Left cardiac atrium (tissue), 4 donors: ENCODE measurements at regions of chrX and their contacts with region 1.

Region 1: GRCh38 chrX:150772150-150772970 is 79.2 kb downstream of the MTMR1 start:
- DNase-seq: peak; percentile 76
- ATAC-seq: peak; percentile 86

Region 2: DNA sequence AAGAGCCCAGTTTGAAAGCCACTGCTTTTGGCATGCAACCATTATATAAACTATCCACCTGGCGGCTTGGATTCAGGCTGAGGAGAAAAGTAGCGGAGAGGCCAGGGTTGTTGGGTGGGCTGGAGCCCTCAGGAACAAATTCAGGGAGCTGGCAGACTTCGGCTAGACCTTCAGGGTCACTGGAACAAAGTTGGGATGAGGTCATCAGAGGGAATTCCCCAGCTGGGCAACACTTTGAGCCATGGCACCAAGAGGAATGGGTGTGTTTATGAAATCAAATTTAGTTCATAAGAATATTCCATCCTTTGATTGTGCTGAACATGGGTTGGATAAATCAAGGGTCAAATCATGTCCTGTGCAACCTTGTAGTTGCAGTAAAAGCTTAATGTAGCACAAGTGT is 57.2 kb before region 1 on chrX:
- intact Hi-C with region 1: no loop called
- DNase-seq: no peak
- ATAC-seq: peak in 1 of 2 donors; percentile 32

Region 3: GRCh38 chrX:150975655-150976390 is 203.5 kb after region 1 on chrX:
- intact Hi-C with region 1: loop called in 1 of 2 experiments (anchors 10 kb)
- DNase-seq: no peak
- ATAC-seq: no peak

Region 4: GRCh38 chrX:151082076-151082948 is 310.0 kb after region 1 on chrX:
- intact Hi-C with region 1: loop called (anchors 1 to 5 kb)
- DNase-seq: peak; percentile 69
- ATAC-seq: peak; percentile 89 to 92